OCI-LY7 (cell line): ENCODE measurements at regions of chr6 and their contacts with region 1.

Region 1: DNA sequence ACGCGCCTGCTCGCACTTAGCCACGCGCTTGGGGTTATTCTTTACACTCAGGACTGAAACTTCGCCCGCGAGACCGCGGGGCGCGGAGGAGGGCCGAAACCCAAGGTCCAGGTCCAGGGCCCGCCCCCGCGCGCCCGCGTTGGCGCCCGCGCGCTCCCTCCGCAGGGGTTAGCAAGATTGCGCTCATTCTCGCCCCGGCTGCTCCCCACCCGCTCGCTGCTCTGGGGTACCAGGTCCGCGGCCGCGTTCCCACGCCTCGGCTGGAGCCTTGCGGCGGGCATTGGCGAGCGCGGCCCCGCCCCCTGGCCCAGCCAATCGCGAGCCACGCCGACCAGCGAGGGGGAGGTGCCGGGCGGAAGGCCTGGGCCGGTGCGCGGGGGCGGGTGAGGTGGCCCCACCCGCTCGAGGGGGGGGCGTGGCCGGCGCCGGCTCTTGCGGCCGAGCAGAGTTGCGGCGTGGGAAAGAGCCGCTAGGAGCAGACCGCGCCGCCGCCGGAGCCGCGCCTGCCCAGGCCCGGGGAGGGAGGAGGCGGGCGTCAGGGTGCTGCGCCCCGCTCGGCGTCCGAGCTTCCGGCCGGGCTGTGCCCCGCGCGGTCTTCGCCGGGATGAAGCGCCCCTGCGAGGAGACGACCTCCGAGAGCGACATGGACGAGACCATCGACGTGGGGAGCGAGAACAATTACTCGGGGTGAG is at the start of gene HEY2:
- DNase-seq: peak; percentile 92
- H3K4me3 ChIP-seq: peak within 1 kb of the TSS; percentile 73
- H3K27ac ChIP-seq: no peak within 1 kb of the TSS
- H3K4me1 ChIP-seq: peaks cover 46% of the 10 kb centered on the region
- CTCF ChIP-seq: peak; percentile 29; the same call in 1 of the 2 replicates
- total RNA-seq, gene HEY2: 0.23 and 0.32 TPM in 2 replicates

Region 2: GRCh38 chr6:125512621-125513020 is 236.7 kb before region 1 on chr6:
- CTCF ChIA-PET with region 1: no interaction called
- POLR2A ChIA-PET with region 1: no interaction called
- intact Hi-C with region 1: loop called (anchors 5 kb)
- DNase-seq: peak; percentile 23
- H3K4me3 ChIP-seq: no peak overlapping the region
- H3K27ac ChIP-seq: no peak overlapping the region
- H3K4me1 ChIP-seq: no peaks in the 10 kb centered on the region
- CTCF ChIP-seq: peak; percentile 68

Region 3: GRCh38 chr6:125598422-125598821 is 150.9 kb before region 1 on chr6:
- CTCF ChIA-PET with region 1: no interaction called
- POLR2A ChIA-PET with region 1: interaction called, 6 read pairs
- intact Hi-C with region 1: loop called (anchors 5 kb)
- DNase-seq: no peak
- H3K4me3 ChIP-seq: no peak overlapping the region
- H3K27ac ChIP-seq: no peak overlapping the region
- H3K4me1 ChIP-seq: peaks cover 5% of the 10 kb centered on the region
- CTCF ChIP-seq: no peak

Region 4: GRCh38 chr6:125729983-125730382 is 19.3 kb before region 1 on chr6:
- CTCF ChIA-PET with region 1: no interaction called
- POLR2A ChIA-PET with region 1: interaction called, 10 read pairs
- intact Hi-C with region 1: no loop called
- DNase-seq: no peak
- H3K4me3 ChIP-seq: no peak overlapping the region
- H3K27ac ChIP-seq: no peak overlapping the region
- H3K4me1 ChIP-seq: no peaks in the 10 kb centered on the region
- CTCF ChIP-seq: no peak

Region 5: DNA sequence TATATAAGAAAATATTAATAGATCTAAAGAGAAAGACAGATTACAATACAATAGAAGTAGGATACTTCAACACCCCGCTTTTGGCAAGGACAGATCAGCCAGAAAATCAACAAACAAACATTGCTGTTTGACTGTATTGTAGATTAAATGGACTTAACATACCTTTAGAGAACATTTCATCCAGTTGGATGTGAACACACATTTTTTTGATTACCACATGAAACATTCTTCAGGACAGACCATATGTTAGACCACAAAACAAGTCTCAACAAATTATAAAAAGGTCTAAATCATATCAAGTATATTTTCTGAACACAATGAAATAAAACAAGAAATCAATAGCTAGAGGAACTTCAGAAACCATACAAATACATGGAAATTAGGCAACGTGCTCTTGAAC is 385.2 kb after region 1 on chr6:
- CTCF ChIA-PET with region 1: no interaction called
- POLR2A ChIA-PET with region 1: no interaction called
- intact Hi-C with region 1: no loop called
- DNase-seq: no peak
- H3K4me3 ChIP-seq: no peak overlapping the region
- H3K27ac ChIP-seq: no peak overlapping the region
- H3K4me1 ChIP-seq: no peaks in the 10 kb centered on the region
- CTCF ChIP-seq: no peak